Posterior cingulate gyrus (tissue), 11 donors: ENCODE measurements at regions of chr5 and their contacts with region 1.

Region 1: DNA sequence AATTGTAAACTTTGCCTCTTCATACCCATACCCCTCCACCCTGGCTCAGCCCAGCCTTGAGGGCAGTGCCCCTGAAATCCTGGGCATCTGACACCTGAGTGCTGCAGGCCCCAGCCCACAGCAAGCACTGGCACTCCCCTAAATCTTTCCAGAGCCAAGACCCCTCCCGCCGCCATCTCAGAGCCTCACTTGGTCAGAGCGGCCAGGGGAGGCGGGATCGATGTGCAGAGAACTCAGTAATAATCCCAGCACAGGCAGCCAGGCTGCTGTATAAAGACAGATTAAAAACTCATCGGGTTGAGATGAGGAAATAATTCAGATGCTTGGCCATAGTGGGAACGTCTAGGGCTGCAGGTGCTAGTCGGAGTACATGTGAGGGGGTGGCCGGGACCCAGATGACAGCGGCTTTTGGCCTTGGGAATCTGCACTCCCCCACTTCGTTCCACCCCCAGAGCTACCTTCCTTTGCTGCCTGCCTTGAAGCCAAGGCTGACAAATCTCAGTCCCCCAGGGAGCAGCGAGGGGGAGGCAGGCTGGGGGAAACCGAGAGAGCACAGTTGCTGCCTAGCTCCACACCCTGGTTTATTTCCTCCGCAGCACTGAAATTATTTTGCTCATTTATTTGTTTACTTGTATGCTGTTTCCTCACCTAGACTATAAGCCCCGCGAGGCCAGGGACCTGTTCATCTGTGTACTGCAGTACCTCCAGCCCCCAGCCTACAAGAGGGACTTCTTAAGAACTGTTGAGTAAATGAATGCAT is 19.5 kb upstream of the ARAP3 start:
- DNase-seq: peak in 3 of 10 donors; percentile 78 to 85 (median 84)

Region 2: GRCh38 chr5:141430332-141431113 is 271.0 kb before region 1 on chr5 and contains the start of gene PCDHGA12:
- intact Hi-C with region 1: no loop called
- DNase-seq: peak in 1 of 10 donors; percentile 87

Region 3: GRCh38 chr5:141757402-141757801 is 55.9 kb after region 1 on chr5:
- intact Hi-C with region 1: loop called (anchors 5 kb)
- DNase-seq: peak in 2 of 10 donors; percentile 39 to 92

Region 4: GRCh38 chr5:141825791-141826560 is 124.4 kb after region 1 on chr5:
- intact Hi-C with region 1: loop called (anchors 5 kb)
- DNase-seq: peak in 2 of 10 donors; percentile 81 to 89

Region 5: DNA sequence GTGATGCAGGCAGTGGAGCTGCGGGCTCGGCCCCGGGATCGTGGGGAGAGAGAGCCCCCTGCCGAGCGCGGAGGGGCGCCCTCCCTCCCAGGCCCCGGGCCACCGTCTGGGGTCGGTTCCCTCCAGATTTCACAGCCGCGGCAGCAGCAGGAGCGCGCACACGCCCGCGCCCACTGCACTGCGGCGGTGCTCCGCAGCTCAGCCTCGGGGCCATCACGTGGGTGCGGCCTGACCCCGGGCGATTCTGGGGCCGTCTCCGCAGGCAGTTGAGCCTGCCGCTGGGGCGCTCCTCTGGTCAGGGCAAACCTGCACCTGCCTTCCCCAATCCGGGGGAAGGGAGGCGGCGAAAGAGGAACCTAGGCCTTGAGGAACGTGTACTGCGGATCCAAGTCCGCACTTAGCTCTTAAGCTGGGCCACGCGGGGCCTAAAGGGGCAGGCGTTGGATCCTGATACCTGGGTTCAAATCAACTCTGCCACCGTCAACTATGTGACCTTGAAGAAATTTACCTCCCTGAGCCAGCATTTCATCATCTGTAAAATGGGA is 212.7 kb after region 1 on chr5:
- intact Hi-C with region 1: loop called (anchors 1 kb)
- DNase-seq: peak; percentile 24 to 94 (median 60)